ENCODE measurements at regions of chr17 and their contacts with region 1.

Region 1: DNA sequence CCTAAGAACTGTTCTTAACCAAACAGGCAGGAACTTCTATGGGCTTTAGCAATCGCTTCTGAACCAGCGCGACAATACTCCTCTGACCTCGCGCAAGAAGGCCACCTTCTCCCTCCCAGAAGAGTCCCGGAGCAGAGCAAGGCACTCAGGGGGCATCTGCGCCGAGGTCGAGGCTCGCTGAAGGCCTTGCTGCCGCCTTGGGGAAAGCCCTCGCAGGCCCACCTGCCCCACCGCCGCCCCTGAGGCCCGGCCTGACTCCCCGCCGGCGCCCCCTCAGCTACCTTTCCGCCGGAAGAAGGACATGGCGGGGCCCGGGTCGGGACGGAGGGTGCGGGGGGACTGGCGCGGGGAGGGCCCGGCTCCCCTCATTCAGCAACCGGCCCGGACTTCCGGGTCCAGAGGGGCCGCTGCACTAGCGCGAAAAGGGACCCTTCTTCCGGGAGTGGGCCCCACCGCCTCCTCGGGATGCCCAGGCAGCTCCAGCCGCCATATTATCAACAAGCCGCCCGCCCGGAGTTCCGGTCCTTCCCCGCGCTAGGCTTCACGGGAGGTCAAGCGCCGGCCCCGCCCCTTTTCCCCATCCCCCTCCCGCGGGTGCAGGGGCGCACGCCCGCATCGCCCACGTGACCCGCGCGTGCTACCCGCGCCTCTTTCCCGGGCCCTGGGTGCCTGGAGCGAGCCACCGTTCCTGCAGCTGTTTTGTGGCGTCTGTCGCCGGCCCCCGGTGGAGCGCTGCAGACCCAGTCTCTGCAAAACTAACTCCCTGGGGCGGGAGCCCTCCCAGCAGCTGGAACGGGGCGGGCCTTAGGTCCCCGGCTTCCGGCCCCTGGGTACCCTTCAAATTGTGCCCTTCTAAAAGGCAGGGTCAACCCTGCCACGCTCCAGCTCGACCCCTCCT is at the start of gene AKAP10:
- DNase-seq: peak in 1 of 2 experiments; percentile 98
- H3K4me3 ChIP-seq: peak within 1 kb of the TSS; percentile 78 to 98 (median 90)
- H3K27ac ChIP-seq: peak within 1 kb of the TSS; percentile 91
- H3K4me1 ChIP-seq: peaks cover 2 to 9% (median 3%) of the 10 kb centered on the region in 4 experiments; a peak in 4 of 7 replicates
- H3K27me3 ChIP-seq: no peaks in the 10 kb centered on the region
- CTCF ChIP-seq: no peak
- EP300 ChIP-seq: no peak
- POLR2A ChIP-seq: peak; percentile 70 to 92
- RAD21 ChIP-seq: no peak
- total RNA-seq, gene AKAP10: 24.9 and 27.0 TPM in 2 replicates

Region 2: GRCh38 chr17:19867064-19867313 is 110.6 kb before region 1 on chr17:
- CTCF ChIA-PET with region 1: no interaction called
- POLR2A ChIA-PET with region 1: interaction called, 11 read pairs
- DNase-seq: no peak
- H3K4me3 ChIP-seq: peak overlapping the region; percentile 59 to 79 (median 72)
- H3K27ac ChIP-seq: no peak overlapping the region
- H3K4me1 ChIP-seq: peaks cover 0 to 3% (median under 1%) of the 10 kb centered on the region in 4 experiments; a peak in 1 of 7 replicates
- H3K27me3 ChIP-seq: peaks cover 2 to 14% (median 12%) of the 10 kb centered on the region in 4 experiments
- CTCF ChIP-seq: peak in 2 of 3 experiments; percentile 13 to 19; a peak in 2 of 4 replicates
- EP300 ChIP-seq: no peak
- POLR2A ChIP-seq: no peak; a peak in 1 of 3 replicates
- RAD21 ChIP-seq: 0 out of 4 replicates have a peak, but pooled peaks of 1 of the 2 experiments have one; percentile 20

Region 3: DNA sequence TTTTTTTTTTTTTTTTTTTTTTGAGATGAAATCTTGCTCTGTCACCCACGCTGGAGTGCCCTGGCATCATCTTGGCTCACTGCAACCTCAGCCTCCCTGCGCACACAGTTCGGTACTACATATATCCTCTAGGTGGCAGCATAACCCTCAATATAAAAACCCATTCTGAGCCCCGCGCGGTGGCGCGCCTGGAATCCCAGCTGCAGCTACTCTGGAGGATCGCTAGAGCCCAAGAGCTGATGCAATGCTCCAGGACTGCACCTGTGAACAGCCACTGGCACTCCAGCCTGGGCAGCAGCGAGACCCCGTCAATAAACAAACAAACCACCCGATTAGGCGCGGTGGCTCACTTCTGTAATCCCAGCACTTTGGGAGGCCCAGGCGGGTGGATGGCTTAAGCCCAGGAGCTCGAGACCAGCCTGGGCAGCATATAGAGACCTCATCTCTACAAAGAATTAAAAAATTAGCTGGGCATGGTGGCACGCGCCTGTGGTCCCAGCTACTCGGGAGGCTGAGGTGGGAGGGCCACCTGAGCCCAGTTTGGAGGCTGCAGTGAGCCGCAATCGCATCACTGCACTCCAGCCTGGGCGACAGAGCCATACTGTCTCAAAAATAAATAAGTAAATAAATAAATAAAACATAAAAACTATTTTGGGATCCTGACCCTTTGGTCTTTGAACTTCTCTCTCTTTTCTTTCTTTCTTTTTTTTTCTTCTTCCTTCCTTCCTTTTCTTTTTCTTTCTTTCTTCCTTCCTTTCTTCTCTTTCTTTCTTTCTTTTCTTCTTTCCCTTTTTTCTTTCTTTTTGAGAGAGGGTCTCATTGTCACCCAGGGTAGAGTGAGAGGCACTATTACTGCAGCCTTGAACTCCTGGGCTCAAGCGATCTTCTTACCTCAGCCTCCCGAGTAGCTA is 15.5 kb after region 1 on chr17:
- CTCF ChIA-PET with region 1: interaction called, 3 read pairs
- POLR2A ChIA-PET with region 1: interaction called, 11 read pairs
- DNase-seq: peak; percentile 87 to 93
- H3K4me3 ChIP-seq: peak overlapping the region in 1 of 4 experiments; percentile 36; a peak in 1 of 8 replicates
- H3K27ac ChIP-seq: no peak overlapping the region
- H3K4me1 ChIP-seq: no peaks in the 10 kb centered on the region
- H3K27me3 ChIP-seq: no peaks in the 10 kb centered on the region
- CTCF ChIP-seq: peak; percentile 63 to 97 (median 74)
- EP300 ChIP-seq: no peak
- POLR2A ChIP-seq: no peak
- RAD21 ChIP-seq: peak; percentile 85 to 91

Region 4: GRCh38 chr17:20009302-20010098 is 31.9 kb after region 1 on chr17 and contains the start of gene SPECC1:
- CTCF ChIA-PET with region 1: interaction called, 4 read pairs
- POLR2A ChIA-PET with region 1: interaction called, 11 read pairs
- DNase-seq: peak; percentile 65 to 99
- H3K4me3 ChIP-seq: peak within 1 kb of the TSS; percentile 54 to 88 (median 80)
- H3K27ac ChIP-seq: no peak within 1 kb of the TSS
- H3K4me1 ChIP-seq: peaks cover 0 to 8% (median 3%) of the 10 kb centered on the region in 4 experiments; a peak in 4 of 7 replicates
- H3K27me3 ChIP-seq: peaks cover 0 to 3% (median 0%) of the 10 kb centered on the region in 4 experiments; a peak in 1 of 7 replicates
- CTCF ChIP-seq: peak; percentile 86 to 98 (median 88)
- EP300 ChIP-seq: peak in 1 of 2 experiments; percentile 13; a peak in 1 of 3 replicates
- POLR2A ChIP-seq: no peak
- RAD21 ChIP-seq: peak; percentile 15 to 47; a peak in 3 of 4 replicates
- total RNA-seq, gene SPECC1: 87.9 and 98.7 TPM in 2 replicates

Region 5: DNA sequence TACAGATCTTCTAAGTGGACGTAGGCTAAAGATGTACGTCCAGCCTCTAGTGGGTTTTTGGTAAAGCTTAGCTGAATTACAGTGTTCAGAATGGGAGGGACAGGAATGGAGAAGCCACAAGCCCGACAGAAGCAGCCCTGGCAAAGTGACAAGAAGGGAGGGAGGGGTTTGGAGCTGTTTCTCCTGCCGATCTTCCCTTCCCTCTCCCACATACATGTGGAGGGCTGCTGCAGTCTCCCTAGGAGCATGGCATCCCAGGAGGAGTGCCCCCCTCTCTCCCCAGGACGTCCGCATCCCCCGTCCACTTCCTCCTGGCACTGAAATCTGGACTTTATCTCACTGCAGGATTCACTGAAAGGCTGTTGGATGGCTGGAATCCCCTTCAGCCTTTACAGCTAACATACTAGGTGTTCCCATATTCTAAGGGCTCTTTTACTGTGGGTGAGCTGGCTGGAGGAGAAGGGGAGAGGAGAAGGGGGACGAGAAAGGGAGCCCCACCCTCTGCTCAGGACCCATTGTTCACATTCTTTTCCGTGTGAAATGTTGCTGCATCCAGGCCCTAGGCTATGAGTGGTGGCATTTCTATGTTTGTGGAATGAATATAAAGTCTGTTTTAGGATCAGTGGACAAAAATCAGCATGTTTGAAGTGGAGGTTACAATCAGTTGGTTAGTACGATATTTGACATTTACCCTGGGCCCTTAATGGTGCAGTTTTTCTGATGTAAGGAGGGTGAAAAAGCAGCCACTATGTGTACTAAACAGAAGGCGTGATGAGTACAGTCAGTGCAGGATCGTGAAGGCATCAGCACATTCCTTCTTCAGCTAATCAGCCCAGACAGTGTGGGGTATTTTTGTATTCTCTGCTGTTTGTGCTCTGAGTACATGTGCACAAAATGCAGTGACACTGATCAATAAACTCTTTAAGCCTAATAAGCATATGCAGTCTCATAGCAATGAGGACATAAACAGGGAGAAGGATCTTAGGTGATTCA is 126.2 kb after region 1 on chr17:
- CTCF ChIA-PET with region 1: no interaction called
- POLR2A ChIA-PET with region 1: interaction called, 11 read pairs
- DNase-seq: no peak
- H3K4me3 ChIP-seq: no peak overlapping the region
- H3K27ac ChIP-seq: no peak overlapping the region
- H3K4me1 ChIP-seq: peaks cover 0 to 4% (median 0%) of the 10 kb centered on the region in 4 experiments; a peak in 2 of 7 replicates
- H3K27me3 ChIP-seq: no peaks in the 10 kb centered on the region
- CTCF ChIP-seq: no peak
- EP300 ChIP-seq: no peak
- POLR2A ChIP-seq: no peak
- RAD21 ChIP-seq: no peak